Mammary epithelial cell (primary cell): ENCODE measurements at regions of chr1 and their contacts with region 1.

Region 1: GRCh38 chr1:41122851-41123507 is 101.5 kb upstream of the SLFNL1 start:
- DNase-seq: peak; percentile 77
- H3K4me3 ChIP-seq: no peak overlapping the region
- H3K27ac ChIP-seq: no peak overlapping the region
- H3K4me1 ChIP-seq: peaks cover 4% of the 10 kb centered on the region
- H3K27me3 ChIP-seq: no peaks in the 10 kb centered on the region
- CTCF ChIP-seq: peak; percentile 69 to 73

Region 2: GRCh38 chr1:41023279-41023990 is 99.5 kb before region 1 on chr1:
- CTCF ChIA-PET with region 1: no interaction called
- dilution Hi-C with region 1: no loop called
- in situ Hi-C with region 1: no loop called
- intact Hi-C with region 1: loop called (anchors 1 kb)
- DNase-seq: no peak
- H3K4me3 ChIP-seq: no peak overlapping the region
- H3K27ac ChIP-seq: no peak overlapping the region
- H3K4me1 ChIP-seq: no peaks in the 10 kb centered on the region
- H3K27me3 ChIP-seq: no peaks in the 10 kb centered on the region
- CTCF ChIP-seq: peak in 1 of 2 donors; percentile 32

Region 3: GRCh38 chr1:41045740-41046139 is 77.2 kb before region 1 on chr1:
- CTCF ChIA-PET with region 1: no interaction called
- dilution Hi-C with region 1: no loop called
- in situ Hi-C with region 1: no loop called
- intact Hi-C with region 1: loop called (anchors 1 kb)
- DNase-seq: peak; percentile 91
- H3K4me3 ChIP-seq: peak overlapping the region; percentile 12 to 29 (median 15)
- H3K27ac ChIP-seq: peak overlapping the region; percentile 64
- H3K4me1 ChIP-seq: peaks cover 32% of the 10 kb centered on the region
- H3K27me3 ChIP-seq: no peaks in the 10 kb centered on the region
- CTCF ChIP-seq: no peak